Common myeloid progenitor, CD34-positive (primary cell): ENCODE measurements at regions of chr9 and their contacts with region 1.

Region 1: GRCh38 chr9:124708633-124709291 is 62.3 kb downstream of the NR6A1 start:
- DNase-seq: no peak
- H3K4me3 ChIP-seq: no peak overlapping the region
- H3K27ac ChIP-seq: no peak overlapping the region
- H3K4me1 ChIP-seq: peaks cover 0 to 6% (median 0%) of the 10 kb centered on the region in 4 experiments
- H3K27me3 ChIP-seq: no peaks in the 10 kb centered on the region

Region 2: GRCh38 chr9:124602204-124602603 is 106.6 kb before region 1 on chr9:
- CTCF ChIA-PET with region 1: interaction called, 10 read pairs
- POLR2A ChIA-PET with region 1: no interaction called
- DNase-seq: no peak
- H3K4me3 ChIP-seq: no peak overlapping the region
- H3K27ac ChIP-seq: no peak overlapping the region
- H3K4me1 ChIP-seq: no peaks in the 10 kb centered on the region
- H3K27me3 ChIP-seq: no peaks in the 10 kb centered on the region

Region 3: GRCh38 chr9:124652203-124652992 is 56.4 kb before region 1 on chr9:
- CTCF ChIA-PET with region 1: interaction called, 11 read pairs
- POLR2A ChIA-PET with region 1: no interaction called
- DNase-seq: no peak
- H3K4me3 ChIP-seq: no peak overlapping the region
- H3K27ac ChIP-seq: no peak overlapping the region
- H3K4me1 ChIP-seq: peaks cover 0 to 6% (median under 1%) of the 10 kb centered on the region in 4 experiments
- H3K27me3 ChIP-seq: no peaks in the 10 kb centered on the region

Region 4: DNA sequence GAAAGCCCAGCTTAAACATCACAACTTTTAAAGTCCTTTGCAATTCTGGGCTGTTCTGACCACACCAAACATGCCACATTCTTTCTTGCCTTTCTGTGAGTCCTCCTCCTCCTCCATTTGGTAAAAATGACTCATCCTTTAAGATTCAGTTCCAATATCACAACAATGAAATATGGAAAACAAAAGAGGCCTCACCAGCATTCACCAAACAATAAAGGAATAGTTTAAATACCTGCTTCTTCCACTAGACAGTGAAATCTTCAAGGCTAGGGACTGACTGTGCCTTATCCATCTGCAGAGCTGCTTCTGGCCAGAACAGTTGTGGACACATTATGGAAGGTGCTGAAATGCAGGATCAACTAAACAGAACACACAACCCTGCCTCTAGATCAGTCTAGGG is 26.4 kb after region 1 on chr9:
- CTCF ChIA-PET with region 1: interaction called, 14 read pairs
- POLR2A ChIA-PET with region 1: no interaction called
- DNase-seq: no peak
- H3K4me3 ChIP-seq: no peak overlapping the region
- H3K27ac ChIP-seq: no peak overlapping the region
- H3K4me1 ChIP-seq: peaks cover 0 to 14% (median 6%) of the 10 kb centered on the region in 4 experiments
- H3K27me3 ChIP-seq: no peaks in the 10 kb centered on the region